CD8-positive, alpha-beta T cell (primary cell): ENCODE measurements at regions of chr10 and their contacts with region 1.

Region 1: GRCh38 chr10:43361986-43362839 is 9.2 kb upstream of the FXYD4 start:
- DNase-seq: peak; percentile 94 to 99 (median 97)
- ATAC-seq: peak; percentile 98
- H3K4me3 ChIP-seq: peak overlapping the region; percentile 80
- H3K4me3 Mint-ChIP-seq: peak overlapping the region; percentile 93
- H3K27ac ChIP-seq: peak overlapping the region; percentile 69 to 93
- H3K27ac Mint-ChIP-seq: peak overlapping the region; percentile 98
- H3K4me1 ChIP-seq: peaks cover 15% of the 10 kb centered on the region
- H3K4me1 Mint-ChIP-seq: peaks cover 26% of the 10 kb centered on the region
- H3K27me3 ChIP-seq: no peaks in the 10 kb centered on the region
- H3K27me3 Mint-ChIP-seq: no peaks in the 10 kb centered on the region
- CTCF ChIP-seq: peak; percentile 24

Region 2: GRCh38 chr10:43384252-43385221 is 22.3 kb after region 1 on chr10:
- CTCF ChIA-PET with region 1: no interaction called
- POLR2A ChIA-PET with region 1: no interaction called
- intact Hi-C with region 1: loop called in 1 of 2 experiments (anchors 2 kb)
- DNase-seq: no peak
- ATAC-seq: no peak
- H3K4me3 ChIP-seq: no peak overlapping the region
- H3K4me3 Mint-ChIP-seq: no peak overlapping the region
- H3K27ac ChIP-seq: no peak overlapping the region
- H3K27ac Mint-ChIP-seq: peak overlapping the region; percentile 90
- H3K4me1 ChIP-seq: peaks cover 8% of the 10 kb centered on the region
- H3K4me1 Mint-ChIP-seq: peaks cover 35% of the 10 kb centered on the region
- H3K27me3 ChIP-seq: no peaks in the 10 kb centered on the region
- H3K27me3 Mint-ChIP-seq: no peaks in the 10 kb centered on the region
- CTCF ChIP-seq: no peak

Region 3: DNA sequence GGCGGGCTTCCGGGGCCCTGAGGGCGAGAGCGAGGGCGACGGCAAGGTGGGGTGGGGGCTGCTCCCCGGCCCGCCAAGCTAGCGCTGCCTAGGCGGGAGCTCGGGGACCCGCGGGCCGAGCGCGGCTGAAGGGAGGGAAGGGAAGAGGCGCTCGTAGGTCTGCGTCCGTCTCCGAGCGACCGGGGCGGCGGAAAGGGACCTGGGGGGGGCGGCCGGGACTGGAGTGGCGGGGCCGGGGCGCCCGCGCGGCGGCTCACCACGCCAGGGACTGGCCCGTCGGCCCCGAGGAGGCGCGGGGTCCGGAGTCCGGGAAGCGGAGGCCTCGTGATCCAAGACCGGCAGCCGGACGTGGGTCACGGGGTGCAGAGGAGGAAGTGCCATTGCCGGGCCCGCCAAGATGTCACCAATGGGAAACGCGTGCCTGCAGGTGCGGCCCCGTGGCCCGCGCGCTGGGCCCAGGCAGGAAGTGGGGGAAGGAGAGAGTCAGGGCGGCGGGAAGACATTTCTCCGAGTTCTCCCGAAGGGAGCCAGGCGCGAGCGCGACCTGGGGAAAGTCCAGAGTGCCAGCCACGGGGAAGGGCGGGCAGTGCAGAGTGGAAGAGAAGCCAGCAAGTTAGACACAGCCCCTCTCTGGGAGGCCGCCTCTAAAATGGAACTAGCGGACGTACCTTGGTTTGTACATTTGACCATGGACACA is 34.9 kb after region 1 on chr10:
- CTCF ChIA-PET with region 1: no interaction called
- POLR2A ChIA-PET with region 1: no interaction called
- intact Hi-C with region 1: loop called (anchors 2 kb)
- DNase-seq: peak; percentile 44 to 89 (median 73)
- ATAC-seq: peak; percentile 51
- H3K4me3 ChIP-seq: peak overlapping the region; percentile 64 to 71
- H3K4me3 Mint-ChIP-seq: peak overlapping the region; percentile 94
- H3K27ac ChIP-seq: peak overlapping the region; percentile 66 to 89
- H3K27ac Mint-ChIP-seq: peak overlapping the region; percentile 93
- H3K4me1 ChIP-seq: peaks cover 71% of the 10 kb centered on the region
- H3K4me1 Mint-ChIP-seq: peaks cover 80% of the 10 kb centered on the region
- H3K27me3 ChIP-seq: no peaks in the 10 kb centered on the region
- H3K27me3 Mint-ChIP-seq: no peaks in the 10 kb centered on the region
- CTCF ChIP-seq: no peak

Region 4: DNA sequence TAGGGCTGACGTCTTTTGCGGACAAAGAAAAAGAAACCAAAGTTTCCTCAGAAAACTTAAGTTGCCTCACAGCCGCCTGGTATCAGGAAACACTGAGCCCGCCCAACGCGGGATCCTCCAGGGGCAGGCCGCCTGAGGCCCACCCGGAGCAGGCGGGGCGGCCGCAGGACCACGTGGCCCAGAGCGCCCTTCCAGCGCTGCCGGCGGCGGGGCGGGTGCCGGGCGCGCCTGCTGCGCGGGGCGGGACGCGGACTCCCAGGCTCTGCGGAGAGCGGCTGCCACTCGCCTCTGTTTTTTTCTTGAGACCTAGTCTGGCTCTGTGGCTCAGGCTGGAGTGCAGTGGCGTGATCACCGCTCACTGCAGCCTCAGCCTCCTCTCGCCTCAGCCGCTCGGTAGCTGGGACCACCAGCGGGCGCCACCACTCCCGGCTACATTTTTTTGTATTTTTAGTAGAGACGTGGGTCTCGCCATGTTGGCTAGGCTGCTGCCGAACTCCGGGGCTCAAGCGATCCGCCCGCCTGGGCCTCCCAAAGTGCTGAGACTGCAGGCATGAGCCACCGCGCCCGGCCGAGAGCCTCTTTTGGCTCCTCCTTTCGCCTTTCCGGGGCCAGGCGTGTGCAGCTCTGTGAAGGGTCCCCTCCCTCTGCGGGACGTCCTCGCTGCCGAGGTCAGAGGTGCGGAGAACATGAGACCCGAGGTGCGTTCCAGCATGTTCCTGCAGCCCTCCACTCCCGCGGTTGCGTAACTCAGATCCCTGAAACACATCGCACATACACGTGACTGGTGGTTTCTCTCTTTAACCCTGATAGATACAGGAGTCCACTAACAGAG is 58.4 kb after region 1 on chr10:
- CTCF ChIA-PET with region 1: no interaction called
- POLR2A ChIA-PET with region 1: interaction called, 4 read pairs
- intact Hi-C with region 1: loop called in 1 of 2 experiments (anchors 1 kb)
- DNase-seq: peak; percentile 64 to 96 (median 86)
- ATAC-seq: peak; percentile 87
- H3K4me3 ChIP-seq: peak overlapping the region; percentile 65 to 92
- H3K4me3 Mint-ChIP-seq: peak overlapping the region; percentile 93
- H3K27ac ChIP-seq: peak overlapping the region; percentile 82 to 83
- H3K27ac Mint-ChIP-seq: peak overlapping the region; percentile 98
- H3K4me1 ChIP-seq: peaks cover 40% of the 10 kb centered on the region
- H3K4me1 Mint-ChIP-seq: peaks cover 33% of the 10 kb centered on the region
- H3K27me3 ChIP-seq: no peaks in the 10 kb centered on the region
- H3K27me3 Mint-ChIP-seq: no peaks in the 10 kb centered on the region
- CTCF ChIP-seq: no peak

Region 5: GRCh38 chr10:43436400-43437140 is 74.4 kb after region 1 on chr10 and contains the start of gene ZNF487:
- CTCF ChIA-PET with region 1: interaction called, 5 read pairs
- POLR2A ChIA-PET with region 1: no interaction called
- intact Hi-C with region 1: loop called in 1 of 2 experiments (anchors 5 kb)
- DNase-seq: peak; percentile 80 to 94 (median 87)
- ATAC-seq: peak; percentile 86
- H3K4me3 ChIP-seq: peak within 1 kb of the TSS; percentile 98 to 99
- H3K4me3 Mint-ChIP-seq: peak within 1 kb of the TSS; percentile 94
- H3K27ac ChIP-seq: peak within 1 kb of the TSS; percentile 98 to 100
- H3K27ac Mint-ChIP-seq: peak within 1 kb of the TSS; percentile 97
- H3K4me1 ChIP-seq: peaks cover 18% of the 10 kb centered on the region
- H3K4me1 Mint-ChIP-seq: peaks cover 26% of the 10 kb centered on the region
- H3K27me3 ChIP-seq: no peaks in the 10 kb centered on the region
- H3K27me3 Mint-ChIP-seq: no peaks in the 10 kb centered on the region
- CTCF ChIP-seq: no peak
- total RNA-seq, gene ZNF487: 7.3 to 8.9 TPM

Region 6: DNA sequence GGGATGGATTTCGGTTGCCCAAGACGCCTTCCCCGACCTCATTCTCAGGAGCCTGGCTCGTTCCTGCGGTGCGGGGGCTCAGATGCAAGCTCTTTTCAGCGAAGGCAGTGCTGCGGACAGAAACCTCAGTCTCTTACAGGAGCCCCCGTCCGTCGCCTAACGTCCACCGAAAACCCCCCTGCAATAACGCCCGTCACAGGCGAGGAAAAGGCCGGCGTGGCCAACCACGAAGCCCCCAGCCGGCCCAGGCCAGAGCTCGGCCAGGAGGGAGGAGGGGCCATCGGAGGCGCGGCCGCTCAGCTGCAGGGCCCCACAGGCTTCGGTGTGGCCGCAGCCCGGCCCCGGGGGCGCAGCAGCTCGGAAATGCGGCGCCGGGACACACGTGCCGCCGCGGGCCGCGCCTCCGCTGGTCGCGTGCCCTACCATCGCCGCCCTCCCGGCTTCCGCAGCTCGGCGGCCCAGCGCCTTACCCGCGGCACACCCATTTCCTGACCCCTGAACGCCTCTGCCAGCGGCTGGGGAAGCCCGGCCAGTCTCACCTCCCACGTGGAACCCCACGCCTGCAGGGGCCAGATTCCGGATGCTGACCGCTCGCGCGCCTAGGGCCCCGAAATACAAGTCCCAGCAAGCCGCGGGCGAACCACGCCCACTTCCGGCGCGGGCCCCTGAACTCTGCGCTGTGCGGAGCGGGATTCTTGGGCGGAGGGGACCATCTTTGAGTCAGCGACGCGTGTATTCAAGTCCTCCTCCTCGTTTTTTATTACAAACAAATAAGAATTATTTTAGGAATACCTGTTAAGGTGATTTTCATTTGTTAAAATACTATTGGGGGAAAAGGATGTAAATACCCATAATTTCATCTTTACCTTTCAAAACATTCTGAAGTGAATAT is 212.0 kb after region 1 on chr10 and contains the start of gene ZNF239:
- CTCF ChIA-PET with region 1: no interaction called
- POLR2A ChIA-PET with region 1: no interaction called
- intact Hi-C with region 1: loop called (anchors 1 to 10 kb)
- DNase-seq: peak; percentile 62 to 93 (median 82)
- ATAC-seq: peak; percentile 88
- H3K4me3 ChIP-seq: peak within 1 kb of the TSS; percentile 43 to 63
- H3K4me3 Mint-ChIP-seq: peak within 1 kb of the TSS; percentile 85
- H3K27ac ChIP-seq: peak within 1 kb of the TSS; percentile 38 to 66
- H3K27ac Mint-ChIP-seq: peak within 1 kb of the TSS; percentile 90
- H3K4me1 ChIP-seq: peaks cover 25% of the 10 kb centered on the region
- H3K4me1 Mint-ChIP-seq: peaks cover 51% of the 10 kb centered on the region
- H3K27me3 ChIP-seq: no peaks in the 10 kb centered on the region
- H3K27me3 Mint-ChIP-seq: no peaks in the 10 kb centered on the region
- CTCF ChIP-seq: no peak
- total RNA-seq, gene ZNF239: 0.75 to 1.1 TPM

Region 7: DNA sequence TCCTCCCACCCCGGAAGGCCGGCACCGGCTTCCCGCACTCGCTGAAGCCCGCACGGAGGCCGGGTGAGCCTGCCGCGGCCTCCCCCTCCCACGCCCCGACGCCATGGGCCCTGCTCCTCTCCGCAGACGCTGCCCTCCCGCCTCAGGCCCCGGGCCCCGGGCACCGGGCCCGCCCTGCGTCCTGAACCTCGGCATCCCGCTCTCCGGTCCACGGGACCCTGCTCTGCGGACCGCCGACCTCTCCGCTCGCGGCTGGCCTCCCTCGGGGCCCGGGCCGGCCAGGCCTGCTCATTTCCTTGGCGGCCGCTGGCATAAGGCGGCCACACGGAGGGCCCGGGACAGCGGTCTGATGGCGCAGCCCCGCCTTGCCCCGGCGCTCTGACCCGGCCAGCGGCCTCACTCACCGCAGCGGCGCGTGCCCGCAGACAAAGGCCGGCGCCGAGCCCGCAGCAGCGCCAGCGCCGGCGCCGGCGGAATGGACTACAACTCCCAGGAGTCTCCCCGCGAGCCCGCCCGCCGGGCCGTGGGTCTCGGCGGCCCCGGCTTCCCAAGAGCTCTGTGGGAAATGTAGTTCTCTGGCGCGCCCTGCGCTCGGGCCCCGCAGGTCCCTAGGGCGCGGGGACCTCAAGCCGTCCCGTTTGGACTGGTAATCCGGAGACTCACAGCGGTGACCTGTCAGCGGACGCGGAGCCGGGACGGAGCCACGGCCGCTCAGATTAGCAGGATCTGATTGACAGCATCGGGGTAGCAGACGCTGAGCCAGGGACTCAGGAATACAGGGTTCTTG is 286.4 kb after region 1 on chr10 and contains the start of gene ZNF32:
- CTCF ChIA-PET with region 1: no interaction called
- POLR2A ChIA-PET with region 1: no interaction called
- intact Hi-C with region 1: loop called (anchors 2 kb)
- DNase-seq: peak; percentile 60 to 89 (median 79)
- ATAC-seq: peak; percentile 97
- H3K4me3 ChIP-seq: peak within 1 kb of the TSS; percentile 74 to 92
- H3K4me3 Mint-ChIP-seq: peak within 1 kb of the TSS; percentile 97
- H3K27ac ChIP-seq: peak within 1 kb of the TSS; percentile 48 to 80
- H3K27ac Mint-ChIP-seq: peak within 1 kb of the TSS; percentile 92
- H3K4me1 ChIP-seq: peaks cover 14% of the 10 kb centered on the region
- H3K4me1 Mint-ChIP-seq: peaks cover 23% of the 10 kb centered on the region
- H3K27me3 ChIP-seq: no peaks in the 10 kb centered on the region
- H3K27me3 Mint-ChIP-seq: peaks cover 1% of the 10 kb centered on the region
- CTCF ChIP-seq: no peak
- total RNA-seq, gene ZNF32: 17.4 to 18.9 TPM